ENCODE measurements at regions of chr16 and their contacts with region 1.

Region 1: DNA sequence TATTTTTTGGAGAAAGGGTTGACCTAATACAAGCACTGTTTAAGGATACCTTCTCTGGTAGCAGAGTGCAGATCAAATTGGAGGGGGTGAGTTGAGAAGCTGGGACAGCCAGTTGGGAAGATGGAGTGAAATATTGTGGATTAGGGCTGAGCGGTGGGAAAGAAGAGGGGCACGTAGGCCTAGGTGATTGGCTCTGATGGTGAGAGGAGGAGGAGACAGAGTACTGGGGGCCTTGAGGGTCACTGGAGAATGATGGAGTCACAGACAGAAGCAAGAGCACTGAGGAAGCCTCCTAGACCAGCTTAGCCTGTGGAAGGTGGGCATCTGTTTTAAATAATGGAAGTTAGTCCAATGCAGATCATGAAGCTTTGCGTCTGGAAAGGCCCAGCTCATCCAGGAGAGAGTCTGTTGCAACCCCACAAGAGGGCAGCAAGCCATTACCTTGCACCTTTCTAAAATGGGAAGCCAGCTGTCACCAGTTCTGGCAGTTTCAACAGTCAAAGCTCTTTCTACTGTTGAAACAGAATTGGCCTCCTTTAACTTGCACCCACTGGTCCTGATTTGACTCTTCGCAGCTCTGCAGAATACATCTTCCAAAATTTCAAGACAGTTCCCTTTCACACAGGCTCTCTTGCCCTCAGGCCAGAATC is 11.8 kb downstream of the SLC9A5 start:
- DNase-seq: peak; percentile 46
- H3K4me3 Mint-ChIP-seq: no peak overlapping the region
- H3K27ac Mint-ChIP-seq: no peak overlapping the region
- H3K4me1 Mint-ChIP-seq: no peaks in the 10 kb centered on the region
- H3K27me3 Mint-ChIP-seq: peaks cover 9% of the 10 kb centered on the region

Region 2: GRCh38 chr16:66996324-66996982 is 264.1 kb before region 1 on chr16:
- CTCF ChIA-PET with region 1: no interaction called
- POLR2A ChIA-PET with region 1: no interaction called
- DNase-seq: no peak
- H3K4me3 Mint-ChIP-seq: no peak overlapping the region
- H3K27ac Mint-ChIP-seq: no peak overlapping the region
- H3K4me1 Mint-ChIP-seq: peaks cover 28% of the 10 kb centered on the region
- H3K27me3 Mint-ChIP-seq: no peaks in the 10 kb centered on the region

Region 3: GRCh38 chr16:67091906-67092566 is 168.5 kb before region 1 on chr16:
- CTCF ChIA-PET with region 1: no interaction called
- POLR2A ChIA-PET with region 1: no interaction called
- DNase-seq: no peak
- H3K4me3 Mint-ChIP-seq: no peak overlapping the region
- H3K27ac Mint-ChIP-seq: no peak overlapping the region
- H3K4me1 Mint-ChIP-seq: peaks cover 4% of the 10 kb centered on the region
- H3K27me3 Mint-ChIP-seq: no peaks in the 10 kb centered on the region

Region 4: GRCh38 chr16:67279296-67280089 is 18.9 kb after region 1 on chr16 and contains the start of gene PLEKHG4:
- CTCF ChIA-PET with region 1: interaction called, 15 read pairs
- POLR2A ChIA-PET with region 1: interaction called, 4 read pairs
- DNase-seq: peak; percentile 87
- H3K4me3 Mint-ChIP-seq: peak within 1 kb of the TSS; percentile 82
- H3K27ac Mint-ChIP-seq: peak within 1 kb of the TSS; percentile 69
- H3K4me1 Mint-ChIP-seq: peaks cover 24% of the 10 kb centered on the region
- H3K27me3 Mint-ChIP-seq: no peaks in the 10 kb centered on the region
- total RNA-seq, gene PLEKHG4: 9.2 to 10.9 TPM

Region 5: GRCh38 chr16:67399181-67399733 is 138.7 kb after region 1 on chr16:
- CTCF ChIA-PET with region 1: interaction called, 16 read pairs
- POLR2A ChIA-PET with region 1: no interaction called
- DNase-seq: peak; percentile 52
- H3K4me3 Mint-ChIP-seq: no peak overlapping the region
- H3K27ac Mint-ChIP-seq: no peak overlapping the region
- H3K4me1 Mint-ChIP-seq: peaks cover under 1% of the 10 kb centered on the region
- H3K27me3 Mint-ChIP-seq: peaks cover 24% of the 10 kb centered on the region

Measured in activated CD4-positive, alpha-beta memory T cell treated with anti-CD3 and anti-CD28 coated beads, Interleukin-2, amount 10 ng/mL, durations not matched to agents 7 days and 5 days (primary cell).